Calu3 (cell line): ENCODE measurements at regions of chr7 and their contacts with region 1.

Region 1: DNA sequence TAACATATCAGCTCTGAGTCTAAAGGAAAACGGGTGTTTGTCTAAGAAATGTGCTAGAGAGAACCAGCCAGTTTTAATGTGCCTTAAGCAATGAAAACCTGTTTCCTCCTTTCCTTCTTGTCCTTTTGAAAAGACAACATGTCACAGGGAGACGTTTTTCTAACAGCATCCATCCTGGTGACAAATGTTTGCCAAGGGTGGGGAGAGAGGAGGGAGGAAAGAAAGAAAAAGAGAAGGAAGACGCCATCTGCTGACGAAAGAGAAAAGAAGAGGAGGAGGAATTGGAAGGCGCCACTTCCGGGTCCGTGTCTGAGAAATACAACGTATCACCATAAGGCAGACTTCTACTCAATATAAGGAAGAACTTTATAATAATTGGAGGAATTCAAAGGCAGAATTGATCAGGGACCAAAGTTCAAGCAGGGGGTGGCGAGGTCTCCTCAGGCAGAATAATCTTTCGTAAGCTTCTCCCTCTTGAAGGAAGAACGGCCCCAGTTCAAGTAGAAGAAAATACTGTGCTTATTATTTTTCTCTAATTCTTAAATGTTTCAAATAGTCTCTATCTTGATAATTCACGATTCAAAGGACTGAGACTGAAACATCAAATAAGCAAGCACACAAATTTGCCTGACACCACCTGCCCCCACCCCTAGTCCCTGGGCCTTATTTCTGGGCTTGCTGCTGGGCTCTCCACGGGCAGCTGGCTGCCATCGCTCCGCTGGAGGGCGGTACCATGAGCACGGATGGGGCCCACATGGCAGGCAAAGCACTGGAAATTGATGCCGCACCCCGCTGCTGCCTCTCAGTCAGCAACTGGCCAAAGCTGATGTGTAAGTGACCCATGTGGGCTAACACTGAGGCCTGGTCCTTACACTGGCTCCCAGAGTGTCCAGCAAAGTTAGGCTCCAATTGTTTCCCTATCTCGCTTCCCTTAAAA is 273.7 kb upstream of the KLF14 start:
- DNase-seq: peak; percentile 79
- H3K4me3 Mint-ChIP-seq: peak overlapping the region; percentile 22
- H3K27ac Mint-ChIP-seq: peak overlapping the region; percentile 87
- H3K4me1 Mint-ChIP-seq: peaks cover 75% of the 10 kb centered on the region
- H3K27me3 Mint-ChIP-seq: no peaks in the 10 kb centered on the region
- CTCF ChIP-seq: peak; percentile 28

Region 2: GRCh38 chr7:130641497-130641896 is 366.2 kb before region 1 on chr7:
- CTCF ChIA-PET with region 1: no interaction called
- intact Hi-C with region 1: no loop called
- DNase-seq: no peak
- H3K4me3 Mint-ChIP-seq: no peak overlapping the region
- H3K27ac Mint-ChIP-seq: no peak overlapping the region
- H3K4me1 Mint-ChIP-seq: no peaks in the 10 kb centered on the region
- H3K27me3 Mint-ChIP-seq: no peaks in the 10 kb centered on the region
- CTCF ChIP-seq: no peak

Region 3: DNA sequence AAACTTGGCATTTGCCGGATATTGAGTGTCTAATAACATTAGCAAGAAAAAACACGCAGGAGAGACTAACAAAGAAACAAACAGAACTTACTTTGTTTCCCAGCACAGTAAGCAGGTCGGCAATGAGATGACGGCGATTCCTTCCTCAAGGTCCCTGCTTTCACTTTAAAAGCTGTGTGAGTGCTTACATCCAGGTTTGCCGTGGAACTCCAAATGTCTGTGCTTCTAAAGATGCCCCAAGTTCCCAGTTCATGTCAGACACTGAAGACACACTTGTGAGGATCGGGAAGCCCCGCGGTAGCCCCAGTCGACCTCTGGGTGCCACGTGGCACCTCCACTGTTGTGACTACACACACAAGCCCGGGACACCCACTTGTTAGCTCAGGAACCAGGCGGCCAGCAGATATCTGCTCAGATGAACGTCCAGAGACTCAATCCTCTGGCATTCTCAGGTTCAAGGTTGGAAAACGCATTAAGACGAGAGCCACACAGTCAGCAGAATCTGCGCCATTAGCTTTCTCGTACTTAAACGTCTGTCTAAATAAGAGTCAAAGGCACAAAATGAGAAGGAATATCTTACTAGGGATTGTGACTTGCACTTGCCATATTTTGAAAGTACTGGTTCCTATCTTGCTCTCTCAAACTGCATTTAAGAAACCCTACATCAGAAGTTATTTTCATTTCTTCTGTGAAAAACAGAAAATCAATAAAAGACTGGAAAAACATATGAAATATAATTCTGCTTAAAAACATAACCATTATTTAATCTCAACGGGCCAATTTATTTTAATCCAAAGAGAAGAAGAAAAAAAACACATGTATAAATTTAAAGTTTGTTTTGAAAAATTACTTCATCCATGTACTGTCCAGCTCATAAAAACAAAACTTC is 66.1 kb before region 1 on chr7:
- CTCF ChIA-PET with region 1: no interaction called
- intact Hi-C with region 1: loop called (anchors 5 kb)
- DNase-seq: peak; percentile 68
- H3K4me3 Mint-ChIP-seq: peak overlapping the region; percentile 90
- H3K27ac Mint-ChIP-seq: peak overlapping the region; percentile 97
- H3K4me1 Mint-ChIP-seq: peaks cover 46% of the 10 kb centered on the region
- H3K27me3 Mint-ChIP-seq: no peaks in the 10 kb centered on the region
- CTCF ChIP-seq: no peak